H1 (cell line): ENCODE measurements at regions of chr5 and their contacts with region 1.

Region 1: GRCh38 chr5:1033606-1034420 is 25.2 kb downstream of the NKD2 start:
- DNase-seq: no peak
- H3K4me3 ChIP-seq: no peak overlapping the region
- H3K27ac ChIP-seq: no peak overlapping the region; the same call in 1 of the 2 replicates
- H3K4me1 ChIP-seq: peaks cover 0 to 3% (median 1%) of the 10 kb centered on the region in 4 experiments; a peak in 3 of 7 replicates
- H3K27me3 ChIP-seq: no peaks in the 10 kb centered on the region
- CTCF ChIP-seq: no peak
- EP300 ChIP-seq: no peak
- POLR2A ChIP-seq: no peak
- RAD21 ChIP-seq: no peak

Region 2: DNA sequence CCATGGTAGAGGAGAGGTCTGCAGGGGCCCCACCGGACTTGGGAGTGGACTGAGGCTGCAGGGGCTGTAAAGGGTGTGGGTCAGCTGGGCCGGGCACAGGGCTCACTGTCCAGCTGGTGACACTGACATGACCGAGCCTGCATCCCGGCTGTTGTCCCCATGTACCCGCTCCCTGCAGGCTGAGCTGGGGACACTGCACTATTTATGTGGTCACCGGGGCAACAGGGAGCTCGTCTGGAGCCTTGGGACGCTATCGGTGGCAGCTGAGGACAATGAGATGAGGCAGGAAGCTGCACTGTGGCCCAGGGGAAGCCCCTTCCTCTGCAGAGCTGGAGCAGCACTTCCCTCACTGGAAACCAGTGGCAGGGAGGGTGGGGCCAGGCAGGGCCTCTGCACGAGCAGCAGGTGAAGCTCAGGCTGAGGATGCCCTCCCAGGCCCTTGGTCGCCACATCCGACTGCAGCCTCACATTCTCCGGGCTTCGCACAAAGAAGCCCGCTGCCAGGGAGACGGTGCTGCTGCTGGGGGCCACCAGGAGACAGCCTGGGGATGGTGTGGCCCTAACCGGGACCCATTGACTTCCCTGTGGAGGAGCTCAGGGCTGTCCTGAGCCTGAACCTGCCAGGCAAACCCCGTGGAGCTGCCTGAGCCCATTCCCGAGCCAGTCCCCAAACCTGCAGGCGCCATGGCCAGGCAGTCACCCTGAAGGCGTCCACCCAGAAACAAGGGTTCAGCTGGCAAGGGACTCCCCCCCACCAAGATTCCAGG is 275.7 kb before region 1 on chr5:
- CTCF ChIA-PET with region 1: no interaction called
- POLR2A ChIA-PET with region 1: no interaction called
- DNase-seq: peak in 1 of 2 experiments; percentile 61
- H3K4me3 ChIP-seq: no peak overlapping the region
- H3K27ac ChIP-seq: peak overlapping the region; percentile 37
- H3K4me1 ChIP-seq: no peaks in the 10 kb centered on the region; a peak in 1 of 7 replicates
- H3K27me3 ChIP-seq: no peaks in the 10 kb centered on the region
- CTCF ChIP-seq: no peak
- EP300 ChIP-seq: no peak
- POLR2A ChIP-seq: no peak
- RAD21 ChIP-seq: no peak

Region 3: DNA sequence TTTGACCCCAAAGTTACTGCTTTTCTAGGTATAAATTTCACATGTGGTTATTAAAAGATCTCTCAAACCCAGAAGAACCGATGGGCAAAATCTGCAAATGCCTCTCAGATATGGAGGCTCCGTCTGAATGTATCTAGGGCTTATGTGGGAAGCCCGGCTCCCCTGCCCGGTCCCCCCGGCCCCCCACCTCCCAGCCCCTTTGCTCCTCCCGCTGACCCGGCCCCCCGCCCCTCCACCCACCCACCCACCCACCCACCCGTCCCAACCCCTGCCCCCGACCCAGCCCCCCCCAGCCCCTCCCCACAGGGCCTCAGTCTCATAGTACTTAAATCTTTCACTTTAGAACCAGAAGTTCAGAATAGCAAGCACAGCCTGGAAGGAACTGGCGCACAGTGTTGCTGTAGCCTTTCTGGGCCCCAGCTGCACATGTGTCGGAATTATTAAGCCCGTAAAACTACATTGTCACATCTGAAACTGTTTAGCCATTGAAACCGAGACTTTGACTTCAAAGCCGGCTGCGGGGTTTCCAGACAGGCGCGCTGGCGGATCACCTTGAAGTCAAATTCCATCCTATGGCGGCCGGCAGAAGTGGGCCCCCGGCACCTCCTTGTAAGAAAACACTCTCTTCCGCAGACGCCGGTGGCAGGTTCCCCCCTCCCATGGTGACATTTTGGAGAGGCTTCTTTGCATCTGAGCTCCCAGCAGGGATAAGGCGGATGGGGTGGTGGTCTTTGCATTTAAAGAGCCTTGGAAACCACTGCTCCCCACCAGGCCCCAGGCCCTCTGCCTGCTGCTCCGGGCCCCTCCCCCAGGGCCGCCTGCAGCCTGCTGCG is 12.5 kb before region 1 on chr5:
- CTCF ChIA-PET with region 1: interaction called, 16 read pairs
- POLR2A ChIA-PET with region 1: no interaction called
- DNase-seq: no peak
- H3K4me3 ChIP-seq: no peak overlapping the region
- H3K27ac ChIP-seq: no peak overlapping the region
- H3K4me1 ChIP-seq: peaks cover 0 to 12% (median 5%) of the 10 kb centered on the region in 4 experiments; a peak in 4 of 7 replicates
- H3K27me3 ChIP-seq: no peaks in the 10 kb centered on the region
- CTCF ChIP-seq: no peak
- EP300 ChIP-seq: no peak
- POLR2A ChIP-seq: no peak
- RAD21 ChIP-seq: no peak